Naive thymus-derived CD4-positive, alpha-beta T cell (primary cell): ENCODE measurements at regions of chr16 and their contacts with region 1.

Region 1: DNA sequence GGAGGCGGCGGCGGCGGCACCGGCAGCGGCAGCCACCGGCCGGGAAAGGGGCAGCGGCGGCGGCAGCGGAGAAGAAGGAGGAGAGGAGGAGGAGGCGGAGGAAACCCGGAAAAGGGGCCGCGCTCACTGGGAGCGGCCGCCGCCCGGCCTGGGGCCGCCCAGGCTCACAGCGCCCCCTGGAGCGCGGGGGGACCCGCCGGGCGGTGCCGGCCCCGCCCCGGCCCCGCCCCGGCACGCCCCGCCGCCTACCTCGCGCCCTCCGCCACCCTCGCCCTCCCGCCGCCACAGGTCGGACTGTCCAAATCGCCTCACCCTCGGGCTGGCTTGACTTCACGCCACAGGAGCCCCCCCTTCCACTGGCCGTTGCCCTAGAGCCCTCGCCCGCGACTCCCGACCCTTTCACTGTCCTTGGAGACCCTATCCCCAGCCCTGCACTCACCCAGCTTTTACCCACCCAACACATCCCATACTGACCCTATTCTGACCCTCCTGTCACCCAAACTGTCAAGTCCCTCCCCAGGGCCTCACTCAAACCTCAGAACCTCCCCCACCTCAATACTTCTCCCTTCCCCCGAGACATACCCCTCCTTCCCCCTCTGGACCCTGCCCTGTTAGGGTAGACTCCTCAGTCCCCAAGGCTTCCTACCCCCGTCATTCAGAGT is at the start of gene CSNK2A2:
- DNase-seq: peak; percentile 38 to 81 (median 60)
- ATAC-seq: peak; percentile 99
- H3K4me3 ChIP-seq: peak within 1 kb of the TSS; percentile 63
- H3K4me3 Mint-ChIP-seq: peak within 1 kb of the TSS; percentile 84 to 93 (median 88)
- H3K27ac ChIP-seq: peak within 1 kb of the TSS; percentile 62
- H3K27ac Mint-ChIP-seq: peak within 1 kb of the TSS; percentile 61 to 90 (median 82)
- H3K4me1 ChIP-seq: peaks cover 21 to 22% of the 10 kb centered on the region in 2 donors
- H3K4me1 Mint-ChIP-seq: peaks cover 30 to 51% (median 46%) of the 10 kb centered on the region in 7 donors
- H3K27me3 ChIP-seq: no peaks in the 10 kb centered on the region
- H3K27me3 Mint-ChIP-seq: peaks cover 9 to 33% (median 13%) of the 10 kb centered on the region in 5 donors
- total RNA-seq, gene CSNK2A2: 46.5 to 70.0 (median 67.9) TPM

Region 2: GRCh38 chr16:57447186-57447962 is 750.8 kb before region 1 on chr16 and contains the starts of genes CIAPIN1 and COQ9:
- CTCF ChIA-PET with region 1: no interaction called
- POLR2A ChIA-PET with region 1: no interaction called
- intact Hi-C with region 1: loop called in 1 of 2 experiments (anchors 2 kb)
- DNase-seq: peak; percentile 83 to 94 (median 88)
- ATAC-seq: peak; percentile 99
- H3K4me3 ChIP-seq: peak within 1 kb of the TSS; percentile 84
- H3K4me3 Mint-ChIP-seq: peak within 1 kb of the TSS; percentile 90 to 97 (median 92)
- H3K27ac ChIP-seq: peak within 1 kb of the TSS; percentile 87
- H3K27ac Mint-ChIP-seq: peak within 1 kb of the TSS; percentile 75 to 96 (median 90)
- H3K4me1 ChIP-seq: peaks cover 7 to 17% of the 10 kb centered on the region in 2 donors
- H3K4me1 Mint-ChIP-seq: peaks cover 15 to 64% (median 45%) of the 10 kb centered on the region in 7 donors
- H3K27me3 ChIP-seq: no peaks in the 10 kb centered on the region
- H3K27me3 Mint-ChIP-seq: no peaks in the 10 kb centered on the region
- total RNA-seq, gene CIAPIN1: 33.6 to 52.8 (median 35.8) TPM
- total RNA-seq, gene COQ9: 16.4 to 45.4 (median 36.6) TPM

Region 3: GRCh38 chr16:58025351-58026138 is 172.6 kb before region 1 on chr16 and contains the start of gene MMP15:
- CTCF ChIA-PET with region 1: no interaction called
- POLR2A ChIA-PET with region 1: no interaction called
- intact Hi-C with region 1: loop called (anchors 1 kb)
- DNase-seq: peak; percentile 27 to 74 (median 43)
- ATAC-seq: peak; percentile 76
- H3K4me3 ChIP-seq: peak within 1 kb of the TSS; percentile 78
- H3K4me3 Mint-ChIP-seq: peak within 1 kb of the TSS; percentile 90 to 95 (median 93)
- H3K27ac ChIP-seq: no peak within 1 kb of the TSS
- H3K27ac Mint-ChIP-seq: peak within 1 kb of the TSS; percentile 73 to 90 (median 84)
- H3K4me1 ChIP-seq: peaks cover 8 to 9% of the 10 kb centered on the region in 2 donors
- H3K4me1 Mint-ChIP-seq: peaks cover 6 to 18% (median 12%) of the 10 kb centered on the region in 7 donors
- H3K27me3 ChIP-seq: no peaks in the 10 kb centered on the region
- H3K27me3 Mint-ChIP-seq: peaks cover 0 to 39% (median 3%) of the 10 kb centered on the region in 5 donors
- total RNA-seq, gene MMP15: 0.20 to 0.85 (median 0.69) TPM

Region 4: GRCh38 chr16:58236231-58236690 is 38.1 kb after region 1 on chr16:
- CTCF ChIA-PET with region 1: no interaction called
- POLR2A ChIA-PET with region 1: interaction called, 3 read pairs
- intact Hi-C with region 1: loop called (anchors 1 kb)
- DNase-seq: peak; percentile 18 to 56 (median 45)
- ATAC-seq: peak; percentile 89
- H3K4me3 ChIP-seq: peak overlapping the region; percentile 64
- H3K4me3 Mint-ChIP-seq: peak overlapping the region; percentile 82 to 93 (median 89)
- H3K27ac ChIP-seq: no peak overlapping the region
- H3K27ac Mint-ChIP-seq: peak overlapping the region in 4 of 9 donors; percentile 5 to 36 (median 23)
- H3K4me1 ChIP-seq: peaks cover 8 to 10% of the 10 kb centered on the region in 2 donors
- H3K4me1 Mint-ChIP-seq: peaks cover 0 to 17% (median 13%) of the 10 kb centered on the region in 7 donors
- H3K27me3 ChIP-seq: no peaks in the 10 kb centered on the region
- H3K27me3 Mint-ChIP-seq: peaks cover 5 to 47% (median 21%) of the 10 kb centered on the region in 5 donors

Region 5: DNA sequence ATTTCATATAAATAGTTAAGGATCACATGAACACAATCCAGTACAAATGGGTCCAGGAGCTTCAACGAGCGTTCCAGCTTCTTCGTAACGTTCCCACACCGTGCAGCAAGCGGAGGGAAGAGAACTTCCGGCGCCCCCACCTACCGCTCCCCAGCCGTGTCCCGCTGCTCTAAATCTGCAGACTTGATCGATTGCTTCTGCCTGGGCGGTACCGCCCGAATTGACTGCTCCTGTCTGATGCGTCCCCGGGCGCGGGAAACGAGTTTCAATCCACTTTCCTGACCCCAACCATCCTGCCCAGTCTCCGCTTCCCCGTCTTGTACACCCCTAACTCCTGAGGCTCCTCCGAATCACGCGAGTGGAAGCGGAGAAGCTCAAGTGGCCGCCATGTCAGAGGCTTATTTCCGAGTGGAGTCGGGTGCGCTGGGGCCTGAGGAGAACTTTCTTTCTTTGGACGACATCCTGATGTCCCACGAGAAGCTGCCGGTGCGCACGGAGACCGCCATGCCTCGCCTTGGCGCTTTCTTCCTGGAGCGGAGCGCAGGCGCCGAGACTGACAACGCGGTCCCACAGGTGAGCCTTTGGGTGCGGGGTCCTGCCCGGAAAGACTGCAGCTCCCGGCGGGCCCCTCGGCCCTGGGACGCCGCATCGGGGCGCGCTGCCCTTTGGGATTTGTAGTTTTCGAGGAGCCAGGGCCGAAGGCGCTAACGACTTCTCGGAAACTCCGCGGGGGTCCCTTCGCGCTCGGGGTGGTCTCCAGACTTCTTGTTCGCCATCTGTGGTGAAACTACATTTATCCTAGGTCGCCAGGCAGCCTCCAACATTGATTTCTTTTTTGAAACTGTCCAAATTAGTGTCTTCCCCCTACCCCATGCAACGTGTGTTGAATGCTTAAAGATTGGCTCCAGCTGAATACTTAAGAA is 194.3 kb after region 1 on chr16 and contains the start of gene GINS3:
- CTCF ChIA-PET with region 1: no interaction called
- POLR2A ChIA-PET with region 1: no interaction called
- intact Hi-C with region 1: loop called in 1 of 2 experiments (anchors 1 kb)
- DNase-seq: peak; percentile 67 to 83 (median 81)
- ATAC-seq: peak; percentile 96
- H3K4me3 ChIP-seq: peak within 1 kb of the TSS; percentile 99
- H3K4me3 Mint-ChIP-seq: peak within 1 kb of the TSS; percentile 91 to 100 (median 98)
- H3K27ac ChIP-seq: peak within 1 kb of the TSS; percentile 80
- H3K27ac Mint-ChIP-seq: peak within 1 kb of the TSS; percentile 89 to 99 (median 95)
- H3K4me1 ChIP-seq: peaks cover 5 to 6% of the 10 kb centered on the region in 2 donors
- H3K4me1 Mint-ChIP-seq: peaks cover 3 to 28% (median 16%) of the 10 kb centered on the region in 7 donors
- H3K27me3 ChIP-seq: no peaks in the 10 kb centered on the region
- H3K27me3 Mint-ChIP-seq: peaks cover 0 to 21% (median 0%) of the 10 kb centered on the region in 5 donors
- total RNA-seq, gene GINS3: 0.66 to 13.3 (median 1.4) TPM

Region 6: GRCh38 chr16:58435779-58436178 is 237.6 kb after region 1 on chr16:
- CTCF ChIA-PET with region 1: no interaction called
- POLR2A ChIA-PET with region 1: no interaction called
- intact Hi-C with region 1: no loop called
- DNase-seq: no peak
- ATAC-seq: no peak
- H3K4me3 ChIP-seq: no peak overlapping the region
- H3K4me3 Mint-ChIP-seq: no peak overlapping the region
- H3K27ac ChIP-seq: no peak overlapping the region
- H3K27ac Mint-ChIP-seq: no peak overlapping the region
- H3K4me1 ChIP-seq: no peaks in the 10 kb centered on the region
- H3K4me1 Mint-ChIP-seq: no peaks in the 10 kb centered on the region
- H3K27me3 ChIP-seq: no peaks in the 10 kb centered on the region
- H3K27me3 Mint-ChIP-seq: peaks cover 0 to 17% (median 3%) of the 10 kb centered on the region in 5 donors

Region 7: GRCh38 chr16:58537124-58537906 is 339.2 kb after region 1 on chr16:
- CTCF ChIA-PET with region 1: no interaction called
- POLR2A ChIA-PET with region 1: no interaction called
- intact Hi-C with region 1: no loop called
- DNase-seq: no peak
- ATAC-seq: no peak
- H3K4me3 ChIP-seq: no peak overlapping the region
- H3K4me3 Mint-ChIP-seq: no peak overlapping the region
- H3K27ac ChIP-seq: no peak overlapping the region
- H3K27ac Mint-ChIP-seq: no peak overlapping the region
- H3K4me1 ChIP-seq: no peaks in the 10 kb centered on the region
- H3K4me1 Mint-ChIP-seq: peaks cover 0 to 11% (median 0%) of the 10 kb centered on the region in 7 donors
- H3K27me3 ChIP-seq: no peaks in the 10 kb centered on the region
- H3K27me3 Mint-ChIP-seq: no peaks in the 10 kb centered on the region